ENCODE measurements at regions of chr9 and their contacts with region 1.

Region 1: DNA sequence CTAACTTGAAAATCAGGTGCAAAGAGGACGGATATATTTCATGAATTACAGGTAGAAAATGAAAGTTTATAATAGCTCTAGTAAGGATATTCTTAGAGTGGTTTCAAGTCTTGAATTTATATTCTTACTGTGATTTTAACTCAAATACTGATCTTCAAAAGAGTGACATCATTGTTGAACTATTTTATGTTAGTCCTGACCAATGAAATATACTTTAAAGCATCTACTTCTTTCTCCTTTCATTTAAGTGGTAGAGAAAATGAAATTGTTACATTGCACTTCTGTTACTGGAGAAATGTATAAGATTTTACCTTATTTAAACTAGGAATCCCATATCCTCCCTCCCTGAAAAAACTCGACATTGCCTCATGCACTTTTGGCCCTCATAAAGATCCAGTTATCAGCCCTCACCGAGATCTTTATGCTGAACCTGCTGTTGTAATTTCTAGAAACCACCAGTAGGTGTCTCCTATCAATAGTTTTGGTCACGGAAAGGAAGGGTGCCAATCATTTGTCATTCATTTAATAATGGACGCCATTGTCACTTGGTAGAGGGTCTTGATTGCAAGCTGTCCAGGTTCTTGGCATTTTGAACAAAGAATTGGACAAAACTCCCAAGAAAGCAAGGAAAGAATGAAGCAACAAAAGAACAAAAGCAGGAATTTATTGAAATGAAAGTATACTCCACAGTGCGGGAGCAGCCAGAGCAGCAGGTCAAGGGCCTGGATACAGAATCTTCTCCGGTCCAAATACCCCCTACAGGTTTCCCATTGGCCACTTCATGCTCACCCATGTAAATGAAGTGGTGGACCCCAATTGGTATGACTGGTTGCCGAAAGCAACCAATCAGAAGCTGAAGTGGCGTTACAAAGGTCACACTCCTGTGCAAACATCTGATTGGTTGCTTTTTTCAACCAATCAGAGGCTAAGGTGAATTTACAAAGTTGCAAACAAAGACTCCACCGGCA is 524.2 kb downstream of the PSAT1 start:
- DNase-seq: no peak
- ATAC-seq: no peak

Region 2: GRCh38 chr9:76980576-76980975 is 1840.6 kb before region 1 on chr9:
- intact Hi-C with region 1: loop called (anchors 5 kb)
- DNase-seq: no peak
- ATAC-seq: no peak

Region 3: DNA sequence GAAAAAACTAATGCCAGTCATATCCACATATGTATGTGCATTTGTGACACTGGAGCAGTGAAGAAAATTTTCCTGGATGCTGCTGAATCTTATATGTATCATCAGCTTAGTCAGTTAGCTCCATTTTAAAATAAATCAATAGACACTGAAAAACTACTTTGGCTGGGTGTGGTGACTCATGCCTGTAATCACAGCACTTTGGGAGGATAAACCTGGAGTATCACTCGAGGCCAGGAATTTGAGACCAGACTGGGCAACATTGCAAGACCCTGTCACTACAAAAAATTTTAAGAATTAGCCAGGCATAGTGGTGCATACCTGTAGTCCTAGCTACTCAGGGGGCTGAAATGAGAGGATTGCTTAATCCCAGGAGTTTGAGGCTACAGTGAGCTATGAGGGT is 239.6 kb after region 1 on chr9:
- intact Hi-C with region 1: no loop called
- DNase-seq: no peak
- ATAC-seq: no peak